BJ (cell line): ENCODE measurements at regions of chr7 and their contacts with region 1.

Region 1: DNA sequence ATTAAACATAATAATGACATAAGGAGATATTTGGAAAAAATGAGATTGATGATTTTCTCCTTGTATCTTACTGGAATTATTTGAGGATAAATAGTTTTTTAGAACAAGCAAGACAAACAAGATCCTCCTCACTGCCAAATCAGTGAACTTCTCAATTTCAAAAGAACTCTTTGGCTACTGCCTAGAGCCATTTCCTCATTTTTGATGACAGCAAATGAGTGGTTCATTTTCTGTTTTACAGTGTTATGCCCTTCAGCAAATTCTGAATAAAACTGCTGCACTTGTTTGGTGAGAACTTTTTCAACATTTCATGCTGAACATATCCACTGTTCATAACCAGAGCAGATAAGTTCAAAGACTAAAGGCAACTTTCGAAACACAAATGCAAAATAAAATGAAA is 42.5 kb upstream of the AHR start:
- DNase-seq: no peak
- H3K4me3 ChIP-seq: no peak overlapping the region
- H3K27me3 ChIP-seq: no peaks in the 10 kb centered on the region
- CTCF ChIP-seq: no peak

Region 2: DNA sequence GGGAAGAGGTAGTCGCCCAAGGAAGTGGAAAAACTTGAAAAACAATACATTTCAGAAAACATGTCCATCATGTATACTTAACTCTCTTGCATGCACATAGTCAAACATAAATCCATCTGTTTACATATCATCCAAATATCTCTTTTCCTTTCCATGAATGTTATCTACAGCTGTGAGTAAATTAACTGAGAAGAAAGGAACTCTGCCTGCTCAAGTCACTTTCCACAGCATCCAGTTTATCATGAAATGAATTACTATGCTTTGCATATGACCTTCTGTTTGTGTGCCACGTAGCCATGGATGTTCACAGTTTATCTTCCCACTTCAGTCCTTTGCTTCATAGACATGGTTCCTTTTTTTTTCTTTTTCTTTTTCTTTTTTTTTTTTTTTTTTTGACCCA is 570.4 kb before region 1 on chr7:
- CTCF ChIA-PET with region 1: no interaction called
- POLR2A ChIA-PET with region 1: interaction called, 22 read pairs
- DNase-seq: no peak
- H3K4me3 ChIP-seq: no peak overlapping the region
- H3K27me3 ChIP-seq: no peaks in the 10 kb centered on the region
- CTCF ChIP-seq: no peak

Region 3: DNA sequence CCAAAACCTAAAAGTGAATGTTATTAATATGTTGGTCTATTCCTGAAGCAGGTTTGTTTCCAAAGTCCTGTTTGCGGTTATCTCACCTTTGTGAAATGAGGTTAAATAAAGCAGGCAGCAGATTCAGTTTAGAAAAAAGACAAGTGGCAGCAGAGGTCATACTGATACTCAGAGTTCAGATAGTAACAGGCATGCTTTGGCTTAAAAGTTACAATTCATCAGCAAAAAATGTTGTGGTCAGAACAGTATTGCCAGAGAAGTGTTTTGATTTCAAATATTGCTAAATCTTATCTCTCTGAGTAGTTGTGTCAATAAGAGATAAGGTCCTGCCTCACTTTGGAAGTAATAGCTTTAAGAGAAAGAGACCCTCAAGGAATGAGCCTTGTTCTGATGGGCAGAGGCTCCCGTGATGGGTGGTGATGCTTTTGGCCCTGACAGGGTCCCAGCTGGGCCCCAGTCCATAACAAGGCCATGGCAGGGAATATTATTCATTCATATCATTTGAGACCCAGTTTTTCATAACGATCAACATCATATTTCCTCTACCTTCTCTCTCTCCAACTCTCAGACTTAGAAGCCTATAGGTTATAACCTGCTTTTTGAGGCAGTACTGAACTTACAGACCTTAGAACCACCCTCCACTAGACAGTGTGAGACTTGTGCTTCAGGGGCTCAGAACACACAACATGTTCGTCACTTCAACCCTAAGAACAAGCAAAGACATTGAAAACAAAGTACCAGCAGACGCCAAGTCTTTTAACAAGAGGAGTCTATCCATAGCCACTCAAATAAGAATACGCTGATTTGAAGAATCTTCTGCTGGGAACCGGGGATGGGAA is 16.0 kb before region 1 on chr7:
- CTCF ChIA-PET with region 1: no interaction called
- POLR2A ChIA-PET with region 1: no interaction called
- DNase-seq: no peak
- H3K4me3 ChIP-seq: no peak overlapping the region
- H3K27me3 ChIP-seq: no peaks in the 10 kb centered on the region
- CTCF ChIP-seq: no peak